Dorsolateral prefrontal cortex (tissue), 120 donors: ENCODE measurements at regions of chr2 and their contacts with region 1.

Region 1: GRCh38 chr2:13006829-13007717 is 290.3 kb downstream of the TRIB2 start:
- DNase-seq: peak in 8 of 10 donors; percentile 22 to 74 (median 52)
- H3K4me3 ChIP-seq: peak overlapping the region in 52 of 59 donors; percentile 6 to 59 (median 36)
- H3K27ac ChIP-seq: peak overlapping the region in 15 of 59 donors; percentile 6 to 53 (median 31)
- H3K27me3 ChIP-seq: peaks cover 0 to 7% (median 0%) of the 10 kb centered on the region in 45 donors
- CTCF ChIP-seq: peak; percentile 76 to 98 (median 90)

Region 2: GRCh38 chr2:11829947-11830707 is 1176.9 kb before region 1 on chr2:
- intact Hi-C with region 1: loop called in 1 of 2 experiments (anchors 2 kb)
- DNase-seq: peak; percentile 29 to 82 (median 72)
- H3K4me3 ChIP-seq: peak overlapping the region; percentile 0 to 64 (median 38)
- H3K27ac ChIP-seq: peak overlapping the region in 51 of 59 donors; percentile 1 to 89 (median 71)
- H3K27me3 ChIP-seq: no peaks in the 10 kb centered on the region
- CTCF ChIP-seq: peak in 34 of 56 donors; percentile 3 to 53 (median 38)

Region 3: DNA sequence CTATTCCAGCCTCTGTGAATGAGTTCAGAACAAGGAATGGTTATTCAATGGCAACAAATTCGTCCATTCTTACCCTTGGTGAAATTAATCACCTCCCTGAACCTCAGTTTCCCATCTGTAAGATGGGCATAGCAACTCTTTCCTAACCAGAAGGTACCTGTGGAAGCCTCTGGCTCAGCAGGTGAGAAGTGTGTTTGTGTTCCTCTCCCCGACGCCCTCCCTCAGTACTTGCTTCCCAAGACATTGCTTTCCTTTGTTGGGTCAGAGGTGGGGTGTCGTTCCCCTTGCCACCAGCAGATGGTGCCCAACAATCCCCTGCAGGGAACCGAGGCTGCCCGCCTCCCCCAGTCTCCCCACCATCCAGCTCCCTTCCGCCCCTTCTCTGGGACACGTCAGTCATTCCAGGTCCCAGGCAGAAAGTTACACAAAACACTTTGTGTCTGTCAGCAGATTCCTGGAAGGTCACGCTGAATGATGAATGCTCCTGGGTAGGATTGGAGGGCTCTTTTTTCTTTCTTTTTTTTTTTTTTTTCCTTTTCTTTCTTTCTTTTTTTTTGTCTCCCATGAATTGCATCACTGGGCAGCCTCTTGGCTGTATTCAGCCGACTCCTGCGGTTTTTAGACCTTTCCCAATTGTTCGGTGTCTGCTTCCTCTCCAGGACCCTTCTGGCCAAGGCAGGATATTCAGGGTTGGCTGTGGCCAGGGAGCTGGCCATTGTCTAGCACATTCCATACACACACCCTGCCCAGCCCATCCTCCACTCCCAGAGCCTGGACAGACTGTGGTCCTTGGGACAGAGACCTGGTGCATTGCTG is 1143.4 kb before region 1 on chr2:
- intact Hi-C with region 1: loop called (anchors 2 to 10 kb)
- DNase-seq: peak; percentile 37 to 88 (median 79)
- H3K4me3 ChIP-seq: peak overlapping the region in 16 of 59 donors; percentile 2 to 37 (median 16)
- H3K27ac ChIP-seq: peak overlapping the region in 13 of 59 donors; percentile 5 to 67 (median 33)
- H3K27me3 ChIP-seq: no peaks in the 10 kb centered on the region
- CTCF ChIP-seq: peak; percentile 82 to 98 (median 96)

Region 4: GRCh38 chr2:12169721-12170120 is 837.4 kb before region 1 on chr2:
- intact Hi-C with region 1: loop called in 1 of 2 experiments (anchors 5 kb)
- DNase-seq: peak in 3 of 10 donors; percentile 12 to 32 (median 25)
- H3K4me3 ChIP-seq: no peak overlapping the region
- H3K27ac ChIP-seq: peak overlapping the region in 49 of 59 donors; percentile 4 to 87 (median 68)
- H3K27me3 ChIP-seq: peaks cover 0 to 4% (median 0%) of the 10 kb centered on the region in 45 donors
- CTCF ChIP-seq: no peak

Region 5: GRCh38 chr2:12797815-12798214 is 209.3 kb before region 1 on chr2:
- intact Hi-C with region 1: no loop called
- DNase-seq: no peak
- H3K4me3 ChIP-seq: no peak overlapping the region
- H3K27ac ChIP-seq: no peak overlapping the region
- H3K27me3 ChIP-seq: no peaks in the 10 kb centered on the region
- CTCF ChIP-seq: no peak

Region 6: GRCh38 chr2:12918835-12919445 is 88.1 kb before region 1 on chr2:
- intact Hi-C with region 1: no loop called
- DNase-seq: no peak
- H3K4me3 ChIP-seq: no peak overlapping the region
- H3K27ac ChIP-seq: peak overlapping the region in 21 of 59 donors; percentile 0 to 63 (median 32)
- H3K27me3 ChIP-seq: no peaks in the 10 kb centered on the region
- CTCF ChIP-seq: no peak